Breast epithelium (tissue), 4 donors: ENCODE measurements at regions of chr18 and their contacts with region 1.

Region 1: GRCh38 chr18:38951633-38952032 is 1386.0 kb upstream of the CELF4 start:
- DNase-seq: no peak
- H3K4me3 ChIP-seq: no peak overlapping the region
- H3K27ac ChIP-seq: no peak overlapping the region
- H3K4me1 ChIP-seq: no peaks in the 10 kb centered on the region
- H3K27me3 ChIP-seq: no peaks in the 10 kb centered on the region
- CTCF ChIP-seq: no peak
- POLR2A ChIP-seq: no peak

Region 2: GRCh38 chr18:38572554-38573111 is 379.0 kb before region 1 on chr18:
- intact Hi-C with region 1: loop called (anchors 5 kb)
- DNase-seq: no peak
- H3K4me3 ChIP-seq: no peak overlapping the region
- H3K27ac ChIP-seq: no peak overlapping the region
- H3K4me1 ChIP-seq: no peaks in the 10 kb centered on the region
- H3K27me3 ChIP-seq: no peaks in the 10 kb centered on the region
- CTCF ChIP-seq: no peak
- POLR2A ChIP-seq: no peak